ENCODE measurements at regions of chr12 and their contacts with region 1.

Region 1: GRCh38 chr12:101414533-101415119 is 7.1 kb upstream of the ARL1 start:
- DNase-seq: peak; percentile 58
- ATAC-seq: 0 out of 3 replicates have a peak, but pooled peaks have one; percentile 47
- H3K4me3 ChIP-seq: no peak overlapping the region
- H3K27ac ChIP-seq: no peak overlapping the region
- H3K4me1 ChIP-seq: peaks cover 8% of the 10 kb centered on the region; the same call in 1 of the 2 replicates
- H3K27me3 ChIP-seq: no peaks in the 10 kb centered on the region
- CTCF ChIP-seq: peak; percentile 78
- EP300 ChIP-seq: no peak
- POLR2A ChIP-seq: no peak
- RAD21 ChIP-seq: peak; percentile 59; the same call in 1 of the 2 replicates

Region 2: DNA sequence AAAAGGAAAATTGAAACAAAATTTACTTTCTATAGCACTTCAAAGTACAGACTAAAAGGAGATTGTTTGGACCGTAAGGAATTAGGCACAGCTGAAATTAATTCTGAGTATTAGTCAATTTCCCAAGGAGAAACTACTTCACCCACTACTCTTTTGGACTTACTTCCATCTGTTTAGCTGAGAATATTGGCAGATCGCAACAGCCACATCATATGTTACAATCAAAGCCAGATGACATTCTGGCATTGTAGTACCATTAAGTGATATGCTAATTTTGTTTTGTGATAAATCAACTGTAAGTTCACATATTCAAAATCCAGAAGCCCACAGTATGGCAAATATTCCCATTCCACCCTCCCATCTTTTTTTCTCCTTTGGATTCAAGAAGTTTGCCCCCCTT is 1382.8 kb before region 1 on chr12:
- CTCF ChIA-PET with region 1: no interaction called
- POLR2A ChIA-PET with region 1: no interaction called
- in situ Hi-C with region 1: no loop called
- intact Hi-C with region 1: no loop called
- DNase-seq: no peak
- ATAC-seq: no peak
- H3K4me3 ChIP-seq: no peak overlapping the region
- H3K27ac ChIP-seq: no peak overlapping the region
- H3K4me1 ChIP-seq: no peaks in the 10 kb centered on the region
- H3K27me3 ChIP-seq: no peaks in the 10 kb centered on the region
- CTCF ChIP-seq: no peak
- EP300 ChIP-seq: no peak
- POLR2A ChIP-seq: no peak
- RAD21 ChIP-seq: no peak

Region 3: DNA sequence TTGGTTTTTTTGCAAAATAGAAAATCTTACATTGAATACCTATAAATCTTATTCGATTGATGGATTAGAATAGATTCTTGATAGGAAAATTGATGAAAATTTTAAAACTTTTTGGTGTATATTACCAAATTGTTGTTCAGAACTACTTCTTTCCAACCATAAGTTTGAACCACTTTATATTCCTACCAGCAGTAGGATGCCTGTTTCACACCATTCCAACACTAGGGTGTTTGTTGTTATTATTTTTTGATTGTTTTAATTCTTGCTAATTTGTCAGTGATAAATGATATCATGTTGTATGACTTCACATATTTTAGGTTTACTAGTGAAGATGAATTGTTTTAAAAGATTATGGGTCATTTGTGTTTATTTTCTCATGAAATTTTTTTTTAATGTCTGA is 91.4 kb before region 1 on chr12:
- CTCF ChIA-PET with region 1: no interaction called
- POLR2A ChIA-PET with region 1: no interaction called
- in situ Hi-C with region 1: no loop called
- intact Hi-C with region 1: no loop called
- DNase-seq: no peak
- ATAC-seq: no peak
- H3K4me3 ChIP-seq: no peak overlapping the region
- H3K27ac ChIP-seq: no peak overlapping the region
- H3K4me1 ChIP-seq: no peaks in the 10 kb centered on the region
- H3K27me3 ChIP-seq: no peaks in the 10 kb centered on the region
- CTCF ChIP-seq: no peak
- EP300 ChIP-seq: no peak
- POLR2A ChIP-seq: no peak
- RAD21 ChIP-seq: no peak

Region 4: GRCh38 chr12:101490286-101490920 is 75.8 kb after region 1 on chr12:
- CTCF ChIA-PET with region 1: no interaction called
- POLR2A ChIA-PET with region 1: no interaction called
- in situ Hi-C with region 1: no loop called
- intact Hi-C with region 1: loop called (anchors 2 kb)
- DNase-seq: peak; percentile 61
- ATAC-seq: peak; percentile 93
- H3K4me3 ChIP-seq: no peak overlapping the region
- H3K27ac ChIP-seq: no peak overlapping the region
- H3K4me1 ChIP-seq: peaks cover 10% of the 10 kb centered on the region
- H3K27me3 ChIP-seq: peaks cover 0 to 4% of the 10 kb centered on the region in 2 experiments; a peak in 1 of 5 replicates
- CTCF ChIP-seq: peak; percentile 80
- EP300 ChIP-seq: no peak
- POLR2A ChIP-seq: no peak
- RAD21 ChIP-seq: peak; percentile 70; the same call in 1 of the 2 replicates

Region 5: DNA sequence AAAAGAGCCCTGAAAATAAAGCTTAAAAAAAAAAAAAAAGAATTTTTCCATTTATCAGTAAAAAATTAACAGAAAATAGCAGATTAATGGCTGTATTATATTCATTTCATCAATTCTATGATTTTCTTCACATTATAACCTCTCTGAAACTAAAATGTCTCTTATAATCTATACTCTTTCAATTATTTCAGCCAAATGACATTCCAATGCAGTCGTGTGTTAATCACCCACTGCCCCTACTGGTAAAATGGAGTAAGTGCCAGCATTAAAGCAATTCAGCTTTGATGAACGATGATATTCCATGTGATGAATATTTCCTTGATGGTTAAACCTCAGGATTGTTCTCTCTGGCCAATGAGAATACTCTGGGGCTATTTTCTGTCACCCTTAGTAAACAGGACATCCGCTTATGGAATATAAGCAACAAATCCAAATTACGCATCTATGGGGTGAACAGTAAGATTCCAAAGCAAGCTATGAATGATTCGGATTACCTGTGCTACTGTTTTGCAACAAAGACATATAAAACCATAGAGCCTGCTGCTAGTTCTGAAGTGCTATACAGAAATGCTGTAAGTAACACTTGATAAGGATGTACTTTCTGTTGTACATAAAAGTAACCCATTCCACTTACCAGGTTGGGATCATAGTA is 344.9 kb after region 1 on chr12:
- CTCF ChIA-PET with region 1: no interaction called
- POLR2A ChIA-PET with region 1: no interaction called
- in situ Hi-C with region 1: loop called (anchors 25 kb)
- intact Hi-C with region 1: loop called (anchors 5 kb)
- DNase-seq: peak; percentile 39
- ATAC-seq: peak; percentile 76
- H3K4me3 ChIP-seq: no peak overlapping the region
- H3K27ac ChIP-seq: no peak overlapping the region
- H3K4me1 ChIP-seq: no peaks in the 10 kb centered on the region
- H3K27me3 ChIP-seq: no peaks in the 10 kb centered on the region
- CTCF ChIP-seq: peak; percentile 59
- EP300 ChIP-seq: no peak
- POLR2A ChIP-seq: no peak
- RAD21 ChIP-seq: peak; percentile 40; the same call in 1 of the 2 replicates

Region 6: GRCh38 chr12:101839324-101840283 is 425.0 kb after region 1 on chr12:
- CTCF ChIA-PET with region 1: interaction called, 11 read pairs
- POLR2A ChIA-PET with region 1: no interaction called
- in situ Hi-C with region 1: loop called (anchors 10 kb)
- intact Hi-C with region 1: loop called (anchors 1 kb)
- DNase-seq: peak; percentile 64
- ATAC-seq: peak; percentile 87
- H3K4me3 ChIP-seq: no peak overlapping the region
- H3K27ac ChIP-seq: no peak overlapping the region
- H3K4me1 ChIP-seq: peaks cover 7% of the 10 kb centered on the region
- H3K27me3 ChIP-seq: no peaks in the 10 kb centered on the region; a peak in 2 of 5 replicates
- CTCF ChIP-seq: peak; percentile 79
- EP300 ChIP-seq: no peak
- POLR2A ChIP-seq: no peak
- RAD21 ChIP-seq: 0 out of 2 replicates have a peak, but pooled peaks have one; percentile 15